ENCODE measurements at regions of chr1 and their contacts with region 1.

Region 1: GRCh38 chr1:28736450-28737306 is at the start of gene YTHDF2:
- DNase-seq: peak; percentile 98
- total RNA-seq, gene YTHDF2: 44.4 TPM

Region 2: DNA sequence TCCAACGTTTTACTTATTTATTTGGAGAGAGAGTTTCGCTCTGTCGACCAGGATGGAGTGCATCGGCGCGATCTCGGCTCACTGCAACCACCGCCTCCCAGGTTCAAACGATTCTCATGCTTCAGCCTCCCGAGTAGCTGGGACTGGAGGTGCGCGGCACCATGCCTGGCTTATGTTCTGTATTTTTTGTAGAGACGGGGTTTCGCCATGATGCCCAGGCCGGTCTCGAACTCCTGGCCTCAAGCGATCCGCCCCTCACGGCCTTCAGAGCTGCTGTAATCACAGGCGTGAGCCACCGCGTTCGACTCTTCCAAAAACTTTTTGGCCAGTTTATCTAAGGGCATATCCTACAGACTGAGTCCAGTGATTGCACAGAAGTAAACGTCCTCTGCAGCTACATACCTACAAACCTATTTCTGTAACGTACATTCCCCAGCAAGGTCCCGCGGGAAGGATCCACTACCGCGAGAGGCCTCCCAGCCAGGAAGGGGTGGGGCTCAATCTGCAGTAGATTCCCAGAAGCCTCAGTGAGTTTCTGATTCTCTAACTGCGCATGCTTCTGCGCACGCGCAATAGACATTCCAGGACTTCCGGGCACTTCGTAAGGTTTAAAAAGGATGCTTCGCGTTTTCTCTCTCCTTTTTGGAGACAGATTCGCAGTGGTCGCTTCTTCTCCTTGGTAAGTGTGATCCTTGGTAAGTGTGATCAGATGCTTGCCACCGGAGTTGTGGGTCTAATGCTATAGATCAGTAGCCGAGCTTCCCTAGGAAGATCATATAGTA is 231.1 kb before region 1 on chr1 and contains the start of gene RCC1:
- intact Hi-C with region 1: loop called (anchors 5 kb)
- DNase-seq: peak; percentile 97
- total RNA-seq, gene RCC1: 4.1 TPM

Region 3: GRCh38 chr1:28631713-28632112 is 105.0 kb before region 1 on chr1:
- intact Hi-C with region 1: no loop called
- DNase-seq: no peak

Region 4: DNA sequence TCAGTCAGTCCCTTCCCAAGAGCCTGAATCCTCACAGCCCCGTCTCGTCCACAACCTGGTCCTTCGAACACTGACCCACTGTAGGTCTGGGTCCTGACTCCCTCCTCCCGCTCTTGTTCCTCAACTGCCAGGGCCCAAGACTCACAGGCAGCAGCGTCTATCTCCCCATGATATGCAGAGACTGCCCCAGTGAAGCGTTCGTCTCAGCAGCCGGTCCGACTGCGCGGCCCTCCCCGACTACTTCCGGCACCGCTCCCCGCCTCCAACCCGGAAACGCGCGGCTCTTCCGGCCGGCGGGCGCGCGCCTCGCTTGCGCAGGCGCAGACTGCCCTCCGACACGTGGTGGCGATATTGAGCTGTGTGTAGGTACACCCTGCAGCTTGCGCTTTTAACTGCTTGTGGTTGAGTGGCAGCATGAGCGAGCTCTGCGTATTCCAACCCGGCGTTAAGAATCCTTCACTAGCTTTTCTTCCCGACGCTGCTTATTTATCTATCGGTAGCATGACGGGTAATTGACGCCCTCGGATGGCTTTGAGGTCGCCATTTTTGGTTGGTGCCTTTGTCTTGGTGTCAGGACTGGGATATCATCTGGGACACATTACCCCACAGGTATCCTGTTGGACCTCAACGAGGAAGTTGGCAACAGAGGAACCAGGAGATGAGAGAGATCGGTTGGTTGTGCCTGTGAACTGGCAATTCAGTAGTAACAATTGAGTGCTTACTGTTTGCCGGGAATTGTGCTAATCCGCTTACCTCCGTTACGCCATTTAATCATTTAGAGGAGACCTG is 93.6 kb before region 1 on chr1 and contains the start of gene TAF12:
- intact Hi-C with region 1: loop called (anchors 1 kb)
- DNase-seq: peak; percentile 95
- total RNA-seq, gene TAF12: 17.3 TPM

Region 5: DNA sequence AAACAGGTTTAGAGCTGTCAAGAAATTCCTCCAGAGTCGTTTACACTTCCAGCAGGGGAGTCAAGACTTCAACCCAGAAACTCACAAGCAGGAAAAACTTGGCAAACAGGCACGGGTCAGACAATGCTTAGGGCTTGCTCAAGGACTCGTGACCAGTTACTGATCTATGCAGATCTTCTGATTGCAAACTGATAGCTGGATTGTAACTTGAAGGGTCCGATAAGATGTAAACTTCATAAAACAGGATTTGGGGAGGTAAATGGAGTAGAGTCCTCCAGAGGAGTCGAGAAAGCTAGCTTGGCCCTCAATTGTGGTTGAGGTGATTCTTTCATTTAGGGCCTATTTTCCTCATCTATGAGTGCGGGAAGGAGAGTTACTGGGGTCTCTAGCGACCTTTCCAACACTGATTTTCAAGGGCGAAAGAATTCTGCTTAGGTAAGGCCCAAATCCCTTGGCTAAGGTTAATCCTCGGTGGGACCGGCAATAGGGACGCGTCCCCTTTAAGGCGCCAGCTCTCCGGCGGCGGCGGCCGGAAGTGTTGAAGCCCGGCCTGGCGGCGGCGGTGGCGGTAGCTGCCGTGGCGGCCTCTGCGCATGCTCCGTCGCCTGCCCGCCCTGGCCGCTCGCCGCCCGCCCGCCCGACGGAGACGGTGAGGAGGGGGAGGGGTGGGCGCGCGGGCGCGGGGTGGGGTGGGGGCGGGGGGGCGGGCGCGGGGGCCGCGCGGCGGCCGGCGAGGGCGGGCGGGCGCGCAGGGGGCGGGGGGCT is 68.3 kb before region 1 on chr1 and contains the start of gene GMEB1:
- intact Hi-C with region 1: loop called (anchors 1 kb)
- DNase-seq: peak; percentile 94
- total RNA-seq, gene GMEB1: 8.2 TPM

Measured in cardiac septum (tissue), 1 donor.